ENCODE measurements at regions of chr11 and their contacts with region 1.

Region 1: DNA sequence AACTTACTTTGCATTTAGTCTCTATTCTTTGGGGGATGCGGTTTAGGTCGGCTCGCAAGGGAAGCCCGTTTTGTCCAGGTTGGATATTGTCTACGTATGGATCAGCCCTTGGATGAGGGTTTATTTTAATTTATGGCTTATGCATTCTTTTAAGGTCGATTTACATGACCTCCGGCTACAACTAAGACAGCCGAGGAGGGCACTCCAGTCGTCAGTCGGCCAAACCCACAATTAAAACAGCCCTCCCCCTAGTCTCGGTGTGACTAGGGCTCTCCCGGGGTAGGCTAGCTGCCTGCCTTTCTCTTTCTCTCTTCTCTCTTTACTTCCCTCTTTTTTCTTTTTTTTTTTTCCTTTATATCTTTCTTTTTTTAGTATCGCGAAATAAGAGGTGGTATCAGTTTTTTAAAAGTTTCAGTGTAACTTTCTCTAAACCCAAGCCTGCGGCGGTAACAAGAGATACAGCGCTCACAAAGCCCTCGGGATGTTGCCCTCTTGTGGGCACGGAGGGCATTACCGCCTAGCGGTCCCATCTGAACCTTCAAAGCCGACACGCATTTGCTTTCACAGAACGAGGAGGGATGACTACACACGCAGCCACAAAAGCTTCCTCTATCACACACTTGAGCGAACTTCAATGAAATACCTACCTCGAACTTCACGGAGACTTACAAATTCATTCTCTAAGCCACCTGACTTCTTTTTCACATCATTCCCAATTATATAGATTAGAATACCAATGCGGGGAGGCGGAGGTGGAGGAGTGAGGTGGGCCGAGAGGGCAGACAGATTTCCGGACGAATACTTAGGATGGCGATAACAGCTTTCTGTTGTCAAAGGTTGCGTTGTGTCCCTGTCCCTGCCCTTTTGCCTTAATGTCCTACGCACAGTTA is 132.3 kb upstream of the C11orf58 start:
- DNase-seq: peak; percentile 92
- H3K4me3 ChIP-seq: peak overlapping the region; percentile 73
- CTCF ChIP-seq: peak; percentile 99

Region 2: GRCh38 chr11:15793043-15793996 is 812.8 kb before region 1 on chr11:
- in situ Hi-C with region 1: loop called (anchors 25 kb)
- DNase-seq: peak; percentile 28
- H3K4me3 ChIP-seq: no peak overlapping the region
- CTCF ChIP-seq: no peak